ENCODE measurements at regions of chr5 and their contacts with region 1.

Region 1: DNA sequence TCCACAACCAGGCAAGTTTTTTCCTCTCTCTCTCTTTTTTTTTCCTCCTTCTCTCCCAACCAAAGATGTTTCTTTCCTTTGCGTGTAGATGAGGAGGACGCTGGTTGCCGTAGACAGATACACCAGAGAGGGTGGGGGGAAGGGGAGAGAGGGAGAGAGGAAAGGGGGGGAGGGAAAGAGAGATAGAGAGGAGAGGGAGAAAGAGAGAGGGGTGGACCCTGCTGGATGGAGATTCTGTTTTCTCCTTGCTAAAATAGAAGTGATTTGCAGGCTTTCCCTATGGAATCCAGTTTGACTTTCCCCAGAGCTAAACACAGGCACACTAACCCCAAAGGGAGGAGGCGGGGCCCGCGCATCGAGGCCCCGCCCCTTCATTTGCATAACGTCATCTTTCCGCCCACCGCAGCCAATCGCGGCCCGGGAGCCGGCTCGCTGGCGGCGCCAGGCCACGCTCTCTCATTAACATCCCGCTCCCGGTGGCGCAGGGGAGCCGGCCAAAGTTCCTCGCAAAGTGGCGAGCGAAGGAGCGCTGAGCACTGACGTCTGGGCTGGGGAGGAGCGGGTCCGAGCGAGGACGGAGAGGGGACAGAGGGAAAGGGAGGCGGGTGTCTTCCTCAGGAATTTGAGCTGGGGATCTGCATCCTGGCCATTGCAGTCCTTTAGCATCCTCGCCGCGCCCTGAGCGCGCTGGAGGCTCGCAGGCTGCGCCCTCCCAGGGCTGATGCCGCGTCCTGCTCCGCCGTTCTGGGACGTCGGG is 487 bp upstream of the EBF1 start:
- DNase-seq: peak; percentile 92 to 97 (median 95)
- H3K4me3 ChIP-seq: peak overlapping the region; percentile 64
- H3K27ac ChIP-seq: peak overlapping the region; percentile 64 to 93
- H3K4me1 ChIP-seq: peaks cover 13% of the 10 kb centered on the region
- H3K27me3 ChIP-seq: no peaks in the 10 kb centered on the region
- CTCF ChIP-seq: peak in 1 of 3 donors; percentile 32
- EP300 ChIP-seq: no peak
- POLR2A ChIP-seq: peak; percentile 96

Region 2: GRCh38 chr5:158695595-158696330 is 404.4 kb before region 1 on chr5:
- intact Hi-C with region 1: loop called in 3 of 4 experiments (anchors 2 to 5 kb)
- DNase-seq: peak; percentile 66 to 87 (median 83)
- H3K4me3 ChIP-seq: no peak overlapping the region
- H3K27ac ChIP-seq: no peak overlapping the region
- H3K4me1 ChIP-seq: peaks cover 10% of the 10 kb centered on the region
- H3K27me3 ChIP-seq: no peaks in the 10 kb centered on the region
- CTCF ChIP-seq: peak; percentile 82 to 96 (median 91)
- EP300 ChIP-seq: no peak
- POLR2A ChIP-seq: no peak

Region 3: DNA sequence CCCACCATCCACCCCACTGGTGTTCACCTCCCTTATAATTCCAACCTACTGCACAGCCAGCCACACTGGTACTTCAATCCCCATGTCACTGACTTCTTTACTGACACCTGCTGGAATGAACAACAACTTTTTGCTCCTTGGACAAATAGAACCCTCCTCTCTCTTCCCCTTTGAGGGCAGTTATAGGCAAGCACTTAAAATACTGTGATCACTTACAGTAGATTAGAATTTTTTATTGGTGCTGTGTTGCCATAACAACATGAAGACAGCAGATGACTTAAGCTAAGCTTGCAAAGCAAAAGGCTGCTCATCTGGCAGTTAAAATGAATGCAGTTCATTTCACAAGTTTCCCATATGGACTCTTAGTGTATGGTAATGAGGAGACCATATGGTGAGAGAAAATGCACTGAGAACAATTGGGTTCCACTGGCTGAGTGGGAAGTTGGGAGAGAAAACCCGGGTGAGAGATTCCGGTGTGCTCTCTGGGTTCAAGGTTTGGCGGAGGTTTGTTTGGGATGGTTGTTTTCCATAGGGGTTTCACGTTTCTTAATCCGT is 374.8 kb before region 1 on chr5:
- intact Hi-C with region 1: loop called in 1 of 4 experiments (anchors 10 kb)
- DNase-seq: no peak
- H3K4me3 ChIP-seq: no peak overlapping the region
- H3K27ac ChIP-seq: no peak overlapping the region
- H3K4me1 ChIP-seq: peaks cover 12% of the 10 kb centered on the region
- H3K27me3 ChIP-seq: no peaks in the 10 kb centered on the region
- CTCF ChIP-seq: no peak
- EP300 ChIP-seq: no peak
- POLR2A ChIP-seq: no peak

Region 4: DNA sequence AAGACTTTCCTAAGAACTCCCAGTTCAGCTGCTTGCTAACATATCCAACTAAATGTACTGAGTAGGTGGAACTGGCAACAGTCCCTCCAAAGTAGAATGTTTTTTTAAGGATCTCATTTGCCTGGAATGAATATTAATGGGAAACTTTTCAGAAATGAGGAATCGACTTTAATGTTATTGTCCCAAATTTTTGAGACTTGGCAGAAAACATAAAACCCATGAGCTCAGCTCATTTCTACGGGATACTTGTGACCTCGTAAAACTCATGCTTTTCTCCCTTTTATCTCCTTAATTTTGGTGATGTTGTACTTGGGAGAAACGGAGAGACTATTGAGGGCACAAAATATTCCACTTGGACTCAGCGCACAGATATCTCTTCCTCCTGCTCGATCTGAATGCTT is 297.3 kb before region 1 on chr5:
- intact Hi-C with region 1: loop called in 1 of 4 experiments (anchors 10 kb)
- DNase-seq: no peak
- H3K4me3 ChIP-seq: no peak overlapping the region
- H3K27ac ChIP-seq: peak overlapping the region; percentile 17 to 43
- H3K4me1 ChIP-seq: peaks cover 12% of the 10 kb centered on the region
- H3K27me3 ChIP-seq: no peaks in the 10 kb centered on the region
- CTCF ChIP-seq: no peak
- EP300 ChIP-seq: no peak
- POLR2A ChIP-seq: no peak

Region 5: GRCh38 chr5:158819840-158820620 is 280.2 kb before region 1 on chr5:
- intact Hi-C with region 1: no loop called
- DNase-seq: no peak
- H3K4me3 ChIP-seq: no peak overlapping the region
- H3K27ac ChIP-seq: no peak overlapping the region
- H3K4me1 ChIP-seq: peaks cover 1% of the 10 kb centered on the region
- H3K27me3 ChIP-seq: no peaks in the 10 kb centered on the region
- CTCF ChIP-seq: no peak
- EP300 ChIP-seq: no peak
- POLR2A ChIP-seq: no peak

Region 6: DNA sequence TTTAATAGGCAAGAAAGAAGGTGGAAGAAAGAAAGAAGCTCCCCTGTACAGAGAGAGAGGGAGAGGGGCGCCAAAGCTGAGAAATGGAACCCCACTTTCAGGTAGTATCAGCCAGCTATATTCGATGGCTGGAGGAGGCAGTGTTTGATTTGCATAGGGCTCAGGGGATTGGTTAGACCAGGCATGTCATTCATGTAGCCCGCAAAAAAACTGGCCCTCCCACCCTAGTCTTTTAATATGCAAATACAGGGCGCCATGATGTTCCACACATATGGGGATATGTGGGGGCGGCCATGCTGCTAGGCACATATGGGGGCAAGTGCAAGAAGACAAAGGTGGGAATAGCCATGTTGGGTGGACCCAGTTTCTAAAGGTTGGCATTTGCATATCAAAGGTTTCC is 641.6 kb after region 1 on chr5:
- intact Hi-C with region 1: no loop called
- DNase-seq: no peak
- H3K4me3 ChIP-seq: no peak overlapping the region
- H3K27ac ChIP-seq: no peak overlapping the region
- H3K4me1 ChIP-seq: no peaks in the 10 kb centered on the region
- H3K27me3 ChIP-seq: no peaks in the 10 kb centered on the region
- CTCF ChIP-seq: no peak
- EP300 ChIP-seq: no peak
- POLR2A ChIP-seq: no peak

Measured in ovary (tissue), 10 donors.